ENCODE measurements at regions of chr5 and their contacts with region 1.

Region 1: GRCh38 chr5:111278845-111279504 is 54.8 kb downstream of the CAMK4 start:
- DNase-seq: peak in 5 of 10 donors; percentile 32 to 48 (median 39)
- H3K4me3 ChIP-seq: no peak overlapping the region
- H3K27ac ChIP-seq: peak overlapping the region in 24 of 59 donors; percentile 3 to 86 (median 52)
- H3K27me3 ChIP-seq: no peaks in the 10 kb centered on the region
- CTCF ChIP-seq: peak; percentile 28 to 73 (median 56)

Region 2: DNA sequence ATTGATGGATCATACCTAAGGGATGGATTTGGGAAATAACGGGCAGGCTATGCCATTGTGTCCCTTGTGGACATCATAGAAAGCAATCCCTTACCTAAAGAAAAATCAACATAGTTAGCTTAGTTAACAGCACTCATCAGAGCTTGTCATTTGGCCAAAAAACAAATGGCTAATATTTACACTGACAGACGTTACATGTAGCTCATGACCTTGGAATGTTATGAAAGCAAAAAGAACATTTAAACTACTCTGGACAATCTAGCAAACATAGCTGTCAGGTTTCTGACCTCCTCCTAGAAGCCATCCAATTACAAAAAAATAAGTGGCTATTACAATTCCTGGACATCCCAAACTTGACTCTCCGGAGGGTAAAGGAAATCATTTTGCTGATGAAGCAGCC is 576.3 kb before region 1 on chr5:
- intact Hi-C with region 1: no loop called
- DNase-seq: no peak
- H3K4me3 ChIP-seq: no peak overlapping the region
- H3K27ac ChIP-seq: no peak overlapping the region
- H3K27me3 ChIP-seq: no peaks in the 10 kb centered on the region
- CTCF ChIP-seq: no peak

Region 3: DNA sequence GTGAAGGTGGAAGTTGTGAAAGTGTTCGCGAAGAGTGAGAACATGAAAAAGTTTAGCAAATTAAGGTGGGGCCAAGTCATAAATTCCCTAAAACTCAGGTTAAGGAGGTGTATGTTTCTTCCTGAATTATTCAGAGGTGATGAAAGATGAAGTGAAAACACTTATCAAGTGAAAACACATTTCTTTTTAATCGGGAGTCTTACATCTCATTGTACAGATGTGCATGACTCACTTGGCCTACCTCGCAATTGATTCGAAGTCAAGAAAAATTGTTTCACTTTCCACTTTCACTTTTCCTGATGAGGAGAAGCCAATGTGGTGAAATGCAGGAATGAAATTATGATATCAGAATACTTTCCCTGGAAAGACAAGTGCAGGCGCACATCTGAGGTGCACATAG is 461.5 kb before region 1 on chr5:
- intact Hi-C with region 1: no loop called
- DNase-seq: no peak
- H3K4me3 ChIP-seq: no peak overlapping the region
- H3K27ac ChIP-seq: no peak overlapping the region
- H3K27me3 ChIP-seq: no peaks in the 10 kb centered on the region
- CTCF ChIP-seq: no peak

Region 4: GRCh38 chr5:111158105-111158744 is 120.8 kb before region 1 on chr5:
- intact Hi-C with region 1: loop called (anchors 2 to 10 kb)
- DNase-seq: peak in 7 of 10 donors; percentile 49 to 90 (median 72)
- H3K4me3 ChIP-seq: peak overlapping the region in 4 of 59 donors; percentile 6 to 31 (median 10)
- H3K27ac ChIP-seq: no peak overlapping the region
- H3K27me3 ChIP-seq: no peaks in the 10 kb centered on the region
- CTCF ChIP-seq: peak; percentile 95 to 100 (median 99)

Region 5: DNA sequence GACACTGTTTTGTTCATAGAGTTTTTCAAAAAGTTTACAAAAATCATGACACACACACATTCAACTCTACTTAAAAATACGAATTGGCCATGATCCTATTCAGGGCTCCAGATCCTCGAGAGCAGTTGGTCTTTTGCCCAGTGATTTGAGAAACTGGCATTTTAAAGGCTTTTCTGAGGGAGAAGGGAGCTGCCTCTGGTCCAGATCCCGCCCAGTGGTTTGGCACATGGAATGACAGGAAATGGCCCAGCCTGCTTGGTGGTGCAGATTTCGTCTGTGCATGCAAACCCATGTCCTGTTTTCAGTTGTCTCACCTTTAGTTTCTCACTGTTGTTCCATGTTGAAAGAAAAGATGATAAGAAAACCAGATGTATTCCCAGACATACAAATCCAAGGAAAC is 51.2 kb before region 1 on chr5:
- intact Hi-C with region 1: loop called in 1 of 2 experiments (anchors 2 kb)
- DNase-seq: peak in 3 of 10 donors; percentile 14 to 46 (median 43)
- H3K4me3 ChIP-seq: peak overlapping the region in 4 of 59 donors; percentile 6 to 69 (median 13)
- H3K27ac ChIP-seq: peak overlapping the region in 1 of 59 donors; percentile 18
- H3K27me3 ChIP-seq: no peaks in the 10 kb centered on the region
- CTCF ChIP-seq: no peak

Measured in dorsolateral prefrontal cortex (tissue), 120 donors.